Right ventricle myocardium inferior (tissue), 1 donor: ENCODE measurements at regions of chr12 and their contacts with region 1.

Region 1: DNA sequence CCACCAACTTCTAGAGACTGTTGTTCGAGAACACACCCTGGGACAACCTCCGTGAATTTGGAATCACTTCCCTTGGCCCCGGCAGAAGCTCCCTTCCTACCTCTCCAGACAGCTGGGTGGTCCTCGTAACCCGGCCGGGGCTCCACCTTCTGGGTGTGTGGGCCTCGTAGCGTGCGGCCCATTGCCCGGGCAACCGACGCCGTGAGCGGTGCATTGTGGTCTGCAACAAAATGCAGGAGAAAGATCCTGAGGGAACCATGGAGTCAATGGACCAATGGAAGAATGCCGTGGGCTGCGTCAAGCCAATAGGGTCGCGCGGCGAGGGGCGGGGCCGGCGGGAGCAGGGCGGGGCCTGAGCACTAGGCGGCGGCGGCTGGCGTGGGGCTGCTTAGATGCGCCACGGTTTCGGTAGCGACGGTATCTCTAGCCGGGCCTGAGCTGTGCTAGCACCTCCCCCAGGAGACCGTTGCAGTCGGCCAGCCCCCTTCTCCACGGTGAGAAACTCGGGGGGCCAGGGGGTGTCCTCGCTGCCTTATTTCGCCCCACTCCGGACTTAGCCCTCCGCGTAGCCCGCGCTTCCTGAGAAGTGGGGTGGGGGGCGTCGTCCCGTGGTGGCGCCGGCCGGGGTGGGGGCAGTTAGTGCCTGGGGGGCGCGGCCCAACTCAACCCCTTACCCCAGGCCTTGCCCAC is at the start of gene DYNLL1:
- DNase-seq: peak; percentile 97
- ATAC-seq: peak; percentile 98
- total RNA-seq, gene DYNLL1: 166 TPM

Region 2: GRCh38 chr12:120445911-120446843 is 49.7 kb before region 1 on chr12 and contains the starts of genes GATC and TRIAP1:
- intact Hi-C with region 1: loop called (anchors 5 kb)
- DNase-seq: peak; percentile 93
- ATAC-seq: peak; percentile 98
- total RNA-seq, gene GATC: 12.1 TPM
- total RNA-seq, gene TRIAP1: 16.1 TPM

Region 3: GRCh38 chr12:120469450-120470149 is 26.3 kb before region 1 on chr12 and contains the start of gene SRSF9:
- intact Hi-C with region 1: loop called (anchors 1 kb)
- DNase-seq: peak; percentile 98
- ATAC-seq: peak; percentile 98
- total RNA-seq, gene SRSF9: 40.1 TPM